Spleen (tissue), 13 donors: ENCODE measurements at regions of chr14 and their contacts with region 1.

Region 1: GRCh38 chr14:101774006-101774795 is 12.7 kb downstream of the PPP2R5C start:
- DNase-seq: no peak
- H3K4me3 ChIP-seq: no peak overlapping the region
- H3K27ac ChIP-seq: peak overlapping the region in 4 of 8 donors; percentile 30 to 62 (median 53)
- H3K4me1 ChIP-seq: peaks cover 0 to 76% (median 41%) of the 10 kb centered on the region in 6 donors
- H3K27me3 ChIP-seq: no peaks in the 10 kb centered on the region
- CTCF ChIP-seq: no peak
- POLR2A ChIP-seq: no peak

Region 2: DNA sequence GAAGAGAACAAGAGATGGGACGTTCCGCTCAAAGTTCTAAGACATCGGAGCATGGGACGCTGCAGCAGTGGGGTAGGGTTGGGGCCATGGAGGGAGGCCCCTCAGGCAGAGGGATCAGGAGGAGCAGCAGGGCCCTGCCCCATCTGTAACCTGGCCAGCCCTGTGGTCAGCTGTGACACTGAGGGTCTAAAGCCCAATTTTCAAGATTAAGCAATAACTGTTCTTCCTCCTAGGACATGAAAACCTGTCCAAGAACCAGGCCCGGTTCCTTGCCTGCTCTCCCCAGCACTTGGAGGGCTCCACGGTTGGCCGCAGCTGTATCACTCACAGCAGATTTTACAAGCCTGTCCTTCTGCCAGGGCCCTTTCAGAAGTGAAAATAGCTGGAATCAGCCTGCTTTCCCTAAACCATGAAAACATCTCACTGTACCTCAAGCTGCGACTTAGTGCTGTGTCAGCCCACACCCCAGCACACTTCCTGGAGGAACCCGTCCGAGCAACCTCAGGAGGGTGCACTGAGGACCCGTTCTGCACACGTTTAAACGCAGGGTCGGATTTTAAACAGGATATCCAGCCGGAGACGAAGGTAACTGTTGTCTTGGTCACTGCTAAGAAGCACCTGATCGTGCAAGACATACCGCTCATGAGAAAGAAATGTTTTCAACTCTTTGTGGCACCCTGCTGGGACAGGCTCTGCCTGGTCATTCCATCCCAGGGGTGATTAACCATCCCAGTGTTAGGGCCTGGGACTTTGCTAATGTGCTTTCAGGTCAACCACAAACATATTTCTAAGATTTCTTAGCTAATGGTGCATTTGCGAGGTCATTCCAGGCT is 414.8 kb before region 1 on chr14:
- intact Hi-C with region 1: no loop called
- DNase-seq: peak; percentile 57
- H3K4me3 ChIP-seq: no peak overlapping the region
- H3K27ac ChIP-seq: no peak overlapping the region
- H3K4me1 ChIP-seq: peaks cover 0 to 39% (median 4%) of the 10 kb centered on the region in 6 donors
- H3K27me3 ChIP-seq: peaks cover 0 to 36% (median 0%) of the 10 kb centered on the region in 7 donors
- CTCF ChIP-seq: no peak
- POLR2A ChIP-seq: no peak

Region 3: DNA sequence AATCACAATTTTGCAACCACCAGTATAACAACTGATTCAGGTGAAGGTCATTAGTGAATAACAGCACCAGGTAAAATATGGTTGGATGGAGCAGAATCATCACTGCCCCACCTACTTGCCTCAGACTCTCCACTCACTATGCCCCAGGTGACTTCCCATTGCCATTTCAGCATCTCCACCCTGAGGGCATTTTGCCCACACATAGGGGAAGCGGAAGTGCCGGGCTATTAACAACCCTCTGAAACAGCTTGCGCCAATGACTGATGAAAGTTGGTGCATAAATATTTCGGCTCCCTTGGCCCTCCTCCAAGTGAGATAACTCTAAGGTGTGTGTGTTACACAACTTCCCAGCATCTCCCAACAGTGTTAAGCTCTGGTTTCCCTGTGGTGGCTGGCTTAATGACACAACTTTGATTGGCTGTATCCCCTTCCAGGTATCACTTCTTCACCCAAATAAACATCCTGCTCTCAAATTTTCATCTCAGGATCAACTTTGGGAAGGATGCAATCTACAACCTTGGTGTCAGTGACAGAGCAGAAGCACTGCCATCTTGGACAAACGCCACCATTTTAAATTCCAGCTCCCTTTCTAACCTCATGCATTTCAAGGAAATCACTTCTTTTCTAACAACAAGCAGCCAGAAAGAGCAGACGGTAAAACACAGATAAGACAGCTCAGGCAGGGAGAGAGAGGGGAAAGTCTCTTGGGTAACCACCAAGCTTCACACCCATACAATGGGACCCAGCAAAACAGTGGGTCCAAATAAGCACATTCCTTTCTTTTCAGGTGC is 86.2 kb before region 1 on chr14:
- intact Hi-C with region 1: no loop called
- DNase-seq: no peak
- H3K4me3 ChIP-seq: no peak overlapping the region
- H3K27ac ChIP-seq: no peak overlapping the region
- H3K4me1 ChIP-seq: no peaks in the 10 kb centered on the region
- H3K27me3 ChIP-seq: peaks cover 0 to 32% (median 0%) of the 10 kb centered on the region in 7 donors
- CTCF ChIP-seq: no peak
- POLR2A ChIP-seq: no peak

Region 4: DNA sequence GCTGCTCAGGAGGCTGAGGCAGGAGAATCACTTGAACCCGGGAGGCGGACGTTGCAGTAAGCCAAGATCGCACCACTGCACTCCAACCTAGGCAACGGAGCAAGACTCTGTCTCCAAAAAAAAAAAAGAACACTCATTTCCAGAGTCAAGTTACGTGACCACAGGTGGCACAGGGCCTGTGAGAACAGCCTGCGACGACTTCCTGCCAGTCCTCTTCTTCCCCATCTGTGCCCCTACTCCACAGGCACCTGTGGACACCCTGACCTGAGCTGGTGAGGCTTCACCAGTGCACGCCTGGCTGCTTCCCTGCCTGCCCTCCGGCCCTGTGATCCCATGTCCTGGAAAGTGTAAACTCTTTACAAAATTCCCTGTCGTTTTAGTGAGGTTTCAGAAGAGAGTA is 65.0 kb after region 1 on chr14:
- intact Hi-C with region 1: loop called (anchors 10 kb)
- DNase-seq: peak; percentile 83
- H3K4me3 ChIP-seq: no peak overlapping the region
- H3K27ac ChIP-seq: peak overlapping the region in 7 of 8 donors; percentile 29 to 74 (median 61)
- H3K4me1 ChIP-seq: peaks cover 52 to 100% (median 89%) of the 10 kb centered on the region in 6 donors
- H3K27me3 ChIP-seq: no peaks in the 10 kb centered on the region
- CTCF ChIP-seq: no peak
- POLR2A ChIP-seq: no peak

Region 5: GRCh38 chr14:101903111-101903561 is 128.9 kb after region 1 on chr14:
- intact Hi-C with region 1: no loop called
- DNase-seq: peak; percentile 68
- H3K4me3 ChIP-seq: no peak overlapping the region
- H3K27ac ChIP-seq: no peak overlapping the region
- H3K4me1 ChIP-seq: no peaks in the 10 kb centered on the region
- H3K27me3 ChIP-seq: no peaks in the 10 kb centered on the region
- CTCF ChIP-seq: no peak
- POLR2A ChIP-seq: no peak

Region 6: GRCh38 chr14:101947906-101948665 is 173.9 kb after region 1 on chr14:
- intact Hi-C with region 1: loop called (anchors 5 kb)
- DNase-seq: peak; percentile 100
- H3K4me3 ChIP-seq: peak overlapping the region; percentile 58 to 90 (median 67)
- H3K27ac ChIP-seq: peak overlapping the region; percentile 93 to 99 (median 98)
- H3K4me1 ChIP-seq: peaks cover 9 to 31% (median 23%) of the 10 kb centered on the region in 6 donors
- H3K27me3 ChIP-seq: peaks cover 0 to 36% (median 0%) of the 10 kb centered on the region in 7 donors
- CTCF ChIP-seq: peak in 6 of 11 experiments; percentile 25 to 84 (median 63)
- POLR2A ChIP-seq: peak; percentile 52 to 90 (median 62)